A549 (cell line): ENCODE measurements at regions of chr2 and their contacts with region 1.

Region 1: DNA sequence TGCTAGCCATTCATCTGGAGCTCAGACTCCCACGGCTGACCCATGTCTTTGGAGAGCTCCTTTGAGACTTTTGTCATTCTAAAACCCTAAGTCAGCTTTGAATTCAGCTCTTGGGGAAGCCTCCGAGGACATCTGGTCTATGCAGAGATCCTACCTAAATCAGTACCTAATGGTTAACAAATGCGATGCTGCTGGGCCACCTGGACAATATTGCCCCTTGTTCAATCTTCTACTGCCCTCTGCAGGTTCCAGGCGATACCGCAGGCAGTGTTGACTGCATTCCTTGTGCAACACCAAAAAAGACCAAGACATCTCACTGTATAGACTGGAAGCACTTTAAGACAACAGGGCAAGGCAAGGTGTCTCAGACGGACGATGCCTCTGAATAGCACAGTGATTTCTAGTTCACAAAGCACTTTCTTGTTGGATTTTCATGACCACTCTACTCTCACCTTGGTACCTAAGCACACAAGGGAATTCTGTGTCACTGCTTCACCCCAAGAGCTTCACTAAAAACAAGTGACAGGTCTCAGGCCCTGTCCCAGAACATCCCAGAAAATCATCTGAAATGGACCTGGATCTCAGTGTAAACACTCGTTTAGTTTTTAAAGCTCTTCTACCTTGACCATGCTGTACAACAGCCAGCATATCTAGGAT is 80.9 kb downstream of the XDH start:
- DNase-seq: peak; percentile 74 to 80
- ATAC-seq: peak; percentile 85 to 92
- H3K4me3 ChIP-seq: no peak overlapping the region
- H3K27ac ChIP-seq: peak overlapping the region in 1 of 2 experiments; percentile 5; a peak in 1 of 6 replicates
- H3K4me1 ChIP-seq: no peaks in the 10 kb centered on the region
- CTCF ChIP-seq: peak; percentile 97
- EP300 ChIP-seq: no peak
- POLR2A ChIP-seq: no peak
- RAD21 ChIP-seq: peak; percentile 97 to 98

Region 2: GRCh38 chr2:30310955-30311354 is 1022.7 kb before region 1 on chr2:
- CTCF ChIA-PET with region 1: no interaction called
- POLR2A ChIA-PET with region 1: no interaction called
- DNase-seq: no peak
- ATAC-seq: no peak; a peak in 1 of 6 replicates
- H3K4me3 ChIP-seq: no peak overlapping the region
- H3K27ac ChIP-seq: peak overlapping the region in 1 of 2 experiments; percentile 22; a peak in 1 of 6 replicates
- H3K4me1 ChIP-seq: no peaks in the 10 kb centered on the region; the same call in 2 of the 3 replicates
- CTCF ChIP-seq: no peak
- EP300 ChIP-seq: no peak
- POLR2A ChIP-seq: no peak
- RAD21 ChIP-seq: no peak

Region 3: DNA sequence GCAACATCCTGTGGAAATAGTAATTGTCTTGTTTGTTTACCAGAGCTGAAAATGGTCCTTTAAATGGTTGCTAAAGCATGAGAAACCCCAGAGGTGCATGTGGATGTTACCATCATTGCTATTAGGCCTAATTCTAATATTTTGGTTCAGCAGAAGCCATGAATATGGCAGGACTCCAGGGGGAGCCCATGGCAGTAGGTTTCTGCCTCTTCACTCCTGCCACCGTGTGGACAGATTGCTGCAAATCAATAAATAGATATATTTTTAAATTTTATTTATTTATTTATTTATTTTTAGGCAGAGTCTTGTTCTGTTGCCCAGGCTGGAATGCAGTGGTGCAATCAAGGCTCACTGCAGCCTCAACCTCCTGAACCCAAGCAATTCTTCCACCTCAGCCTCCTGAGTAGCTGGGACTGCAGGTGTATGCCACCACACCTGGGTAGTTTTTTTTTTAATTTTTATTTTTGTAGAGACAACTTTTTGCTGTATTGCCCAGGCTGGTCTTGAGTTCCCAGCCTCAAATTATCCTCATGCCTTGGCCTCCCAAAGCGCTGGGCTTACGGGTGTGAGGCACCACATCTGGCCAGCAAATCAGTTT is 471.5 kb before region 1 on chr2:
- CTCF ChIA-PET with region 1: interaction called, 54 read pairs
- POLR2A ChIA-PET with region 1: no interaction called
- DNase-seq: peak; percentile 59 to 87
- ATAC-seq: peak; percentile 68 to 87; a peak in 5 of 6 replicates
- H3K4me3 ChIP-seq: no peak overlapping the region
- H3K27ac ChIP-seq: no peak overlapping the region
- H3K4me1 ChIP-seq: no peaks in the 10 kb centered on the region
- CTCF ChIP-seq: peak; percentile 96
- EP300 ChIP-seq: no peak
- POLR2A ChIP-seq: no peak
- RAD21 ChIP-seq: peak; percentile 73 to 80

Region 4: DNA sequence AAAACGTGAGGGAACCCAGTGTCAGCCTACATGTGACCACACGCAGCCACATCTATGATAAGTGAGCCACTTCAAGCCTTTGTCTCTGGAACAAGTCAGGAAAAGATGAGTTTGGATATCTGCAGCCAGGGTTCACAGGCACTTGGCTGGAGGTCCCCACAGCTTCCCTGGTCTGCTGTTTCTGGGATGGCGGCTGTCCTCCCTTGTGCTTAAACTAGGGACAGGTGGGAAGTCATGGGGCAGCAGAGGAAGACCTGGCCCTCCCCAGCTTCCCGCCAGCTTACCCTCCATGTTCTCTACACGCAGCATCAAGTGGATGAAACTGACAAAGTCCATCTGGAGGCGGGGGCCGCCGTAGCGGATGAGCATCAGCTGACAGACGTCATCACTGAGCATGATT is 156.9 kb before region 1 on chr2:
- CTCF ChIA-PET with region 1: interaction called, 40 read pairs
- POLR2A ChIA-PET with region 1: no interaction called
- DNase-seq: no peak
- ATAC-seq: no peak
- H3K4me3 ChIP-seq: no peak overlapping the region
- H3K27ac ChIP-seq: no peak overlapping the region
- H3K4me1 ChIP-seq: no peaks in the 10 kb centered on the region
- CTCF ChIP-seq: no peak
- EP300 ChIP-seq: no peak
- POLR2A ChIP-seq: no peak
- RAD21 ChIP-seq: no peak

Region 5: GRCh38 chr2:31214444-31214915 is 119.2 kb before region 1 on chr2:
- CTCF ChIA-PET with region 1: no interaction called
- POLR2A ChIA-PET with region 1: no interaction called
- DNase-seq: no peak
- ATAC-seq: no peak
- H3K4me3 ChIP-seq: no peak overlapping the region
- H3K27ac ChIP-seq: no peak overlapping the region
- H3K4me1 ChIP-seq: no peaks in the 10 kb centered on the region
- CTCF ChIP-seq: no peak
- EP300 ChIP-seq: no peak
- POLR2A ChIP-seq: no peak
- RAD21 ChIP-seq: no peak

Region 6: DNA sequence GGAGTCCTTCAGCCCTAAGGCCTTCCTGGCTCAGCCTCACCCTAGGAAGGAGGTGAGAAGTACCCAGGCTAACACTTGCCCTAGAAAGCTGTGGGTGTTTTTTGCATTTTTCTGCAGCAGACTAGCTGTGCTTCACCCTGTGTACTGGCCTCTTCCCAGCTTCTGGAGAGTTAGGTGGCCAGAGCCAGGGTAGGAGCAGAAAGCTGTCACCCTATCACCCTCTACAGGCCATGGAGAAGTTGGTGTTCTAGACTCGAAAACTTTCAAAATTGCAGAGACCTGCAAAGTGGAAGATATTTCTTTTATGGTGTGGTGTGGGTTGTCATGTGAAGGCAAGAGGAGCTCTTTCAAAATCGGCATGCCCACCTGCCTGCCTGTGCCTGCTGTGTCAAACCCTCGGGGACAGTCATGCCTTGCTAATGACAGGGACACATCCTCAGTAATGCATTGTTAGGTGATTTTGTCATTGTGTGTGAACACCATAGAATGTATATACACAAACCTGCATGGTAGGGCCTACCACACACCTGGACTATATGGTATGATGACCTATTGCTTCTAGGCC is 69.9 kb before region 1 on chr2:
- CTCF ChIA-PET with region 1: interaction called, 13 read pairs
- POLR2A ChIA-PET with region 1: no interaction called
- DNase-seq: no peak
- ATAC-seq: peak; percentile 40 to 59; a peak in 3 of 6 replicates
- H3K4me3 ChIP-seq: no peak overlapping the region
- H3K27ac ChIP-seq: no peak overlapping the region
- H3K4me1 ChIP-seq: no peaks in the 10 kb centered on the region
- CTCF ChIP-seq: no peak
- EP300 ChIP-seq: no peak
- POLR2A ChIP-seq: no peak
- RAD21 ChIP-seq: 0 out of 5 replicates have a peak, but pooled peaks of 1 of the 2 experiments have one; percentile 5

Region 7: GRCh38 chr2:31347750-31348149 is 14.1 kb after region 1 on chr2:
- CTCF ChIA-PET with region 1: interaction called, 29 read pairs
- POLR2A ChIA-PET with region 1: no interaction called
- DNase-seq: peak in 1 of 2 experiments; percentile 16
- ATAC-seq: no peak
- H3K4me3 ChIP-seq: no peak overlapping the region
- H3K27ac ChIP-seq: no peak overlapping the region
- H3K4me1 ChIP-seq: no peaks in the 10 kb centered on the region
- CTCF ChIP-seq: no peak
- EP300 ChIP-seq: no peak
- POLR2A ChIP-seq: no peak
- RAD21 ChIP-seq: no peak

Region 8: GRCh38 chr2:31401580-31401979 is 67.9 kb after region 1 on chr2:
- CTCF ChIA-PET with region 1: interaction called, 15 read pairs
- POLR2A ChIA-PET with region 1: no interaction called
- DNase-seq: peak; percentile 81 to 95
- ATAC-seq: peak; percentile 95 to 96
- H3K4me3 ChIP-seq: no peak overlapping the region
- H3K27ac ChIP-seq: peak overlapping the region; percentile 84 to 89
- H3K4me1 ChIP-seq: peaks cover 54% of the 10 kb centered on the region
- CTCF ChIP-seq: no peak
- EP300 ChIP-seq: peak; percentile 82 to 84; a peak in 3 of 5 replicates
- POLR2A ChIP-seq: no peak
- RAD21 ChIP-seq: peak in 1 of 2 experiments; percentile 21; a peak in 4 of 5 replicates